ENCODE measurements at regions of chr4 and their contacts with region 1.

Region 1: DNA sequence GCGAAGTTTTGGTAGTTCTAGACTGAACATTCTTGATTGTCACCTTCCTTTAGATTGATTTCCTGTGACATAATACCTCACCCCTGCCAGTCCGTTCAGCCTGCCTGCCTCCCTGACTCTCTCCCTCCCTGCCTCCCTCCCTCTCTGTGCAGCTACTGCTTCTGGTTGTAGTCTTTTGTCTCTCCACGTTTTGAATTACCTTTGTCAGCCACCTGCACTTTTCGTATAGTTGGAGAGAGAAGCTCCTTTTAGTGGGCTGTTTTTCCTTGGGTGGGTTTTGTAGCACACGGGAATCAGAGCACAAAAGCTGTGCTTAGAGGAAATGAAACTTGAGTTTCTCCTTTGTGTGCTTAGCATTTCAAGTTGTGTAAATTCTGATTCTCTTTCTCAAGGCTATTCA is 32.6 kb upstream of the MSMO1 start:
- DNase-seq: peak in 7 of 9 donors; percentile 16 to 56 (median 51)
- ATAC-seq: peak; percentile 87
- H3K4me3 ChIP-seq: no peak overlapping the region
- H3K4me3 Mint-ChIP-seq: peak overlapping the region; percentile 45 to 80 (median 74)
- H3K27ac ChIP-seq: peak overlapping the region; percentile 49
- H3K27ac Mint-ChIP-seq: peak overlapping the region; percentile 16 to 91 (median 74)
- H3K4me1 ChIP-seq: peaks cover 0 to 15% of the 10 kb centered on the region in 2 donors
- H3K4me1 Mint-ChIP-seq: peaks cover 22 to 42% (median 28%) of the 10 kb centered on the region in 7 donors
- H3K27me3 ChIP-seq: no peaks in the 10 kb centered on the region
- H3K27me3 Mint-ChIP-seq: no peaks in the 10 kb centered on the region

Region 2: DNA sequence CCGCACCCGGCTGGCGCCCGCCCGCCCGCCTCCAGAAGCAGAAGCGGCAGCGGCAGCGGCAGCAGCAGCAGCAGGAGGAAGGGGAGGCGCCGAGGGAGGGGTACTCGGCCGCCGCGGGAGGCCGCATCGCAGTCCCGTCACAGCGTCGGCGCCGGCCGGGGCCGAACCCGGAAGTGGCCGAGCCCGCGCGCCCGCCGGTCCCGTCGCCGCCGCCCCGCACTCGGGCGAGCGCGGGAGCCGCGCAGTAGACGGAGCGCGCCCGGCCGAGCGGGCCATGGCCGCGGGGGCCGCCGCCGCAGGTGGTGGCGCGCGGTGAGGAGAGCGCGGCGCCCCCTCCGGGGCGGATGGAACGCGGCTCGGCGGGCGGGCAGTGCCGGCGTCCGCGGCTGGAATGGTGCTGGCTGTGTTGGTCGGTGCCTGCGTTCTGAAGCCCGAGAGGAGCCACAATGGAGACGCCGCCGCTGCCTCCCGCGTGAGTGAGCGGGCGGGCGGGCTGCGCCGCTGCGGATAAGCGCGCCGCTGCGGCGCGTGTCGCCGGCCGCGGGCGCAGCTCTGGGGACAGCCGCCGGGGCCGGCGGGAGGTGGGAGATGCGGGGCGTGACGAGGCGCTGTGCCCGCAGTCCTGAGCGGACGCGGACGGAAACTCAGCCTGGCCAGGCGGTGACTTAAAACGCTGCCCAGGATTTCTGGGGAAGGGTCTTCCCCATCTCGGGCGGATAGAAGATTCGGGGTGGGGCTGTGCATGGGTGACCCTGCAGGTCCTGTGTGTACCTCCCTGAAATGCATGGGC is 87.3 kb before region 1 on chr4 and contains the start of gene KLHL2:
- CTCF ChIA-PET with region 1: no interaction called
- POLR2A ChIA-PET with region 1: interaction called, 3 read pairs
- intact Hi-C with region 1: loop called in 1 of 2 experiments (anchors 1 kb)
- DNase-seq: peak; percentile 52 to 78 (median 66)
- ATAC-seq: peak; percentile 88
- H3K4me3 ChIP-seq: peak within 1 kb of the TSS; percentile 89
- H3K4me3 Mint-ChIP-seq: peak within 1 kb of the TSS; percentile 86 to 98 (median 96)
- H3K27ac ChIP-seq: peak within 1 kb of the TSS; percentile 65
- H3K27ac Mint-ChIP-seq: peak within 1 kb of the TSS; percentile 90 to 95 (median 92)
- H3K4me1 ChIP-seq: peaks cover 0 to 33% of the 10 kb centered on the region in 2 donors
- H3K4me1 Mint-ChIP-seq: peaks cover 46 to 75% (median 73%) of the 10 kb centered on the region in 7 donors
- H3K27me3 ChIP-seq: no peaks in the 10 kb centered on the region
- H3K27me3 Mint-ChIP-seq: no peaks in the 10 kb centered on the region
- total RNA-seq, gene KLHL2: 26.9 to 39.9 (median 27.9) TPM

Region 3: DNA sequence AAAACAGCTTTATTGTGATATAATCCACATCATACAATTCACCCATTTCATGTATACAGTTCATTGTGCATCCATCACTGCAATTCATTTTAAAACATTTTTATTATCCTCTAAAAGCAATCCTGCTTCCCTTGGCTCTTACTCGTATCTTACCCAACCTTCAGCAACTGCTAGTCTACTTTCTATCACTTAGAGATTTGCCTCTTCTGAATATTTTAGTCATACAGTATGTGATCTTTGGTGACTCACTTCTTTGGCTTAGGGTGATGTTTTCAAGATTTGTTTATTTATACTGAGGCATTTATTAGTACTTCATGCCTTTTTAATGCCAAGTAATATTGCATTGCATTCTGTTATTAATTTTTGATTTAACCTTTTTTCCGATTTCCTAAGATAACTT is 17.6 kb after region 1 on chr4:
- CTCF ChIA-PET with region 1: interaction called, 3 read pairs
- POLR2A ChIA-PET with region 1: no interaction called
- intact Hi-C with region 1: loop called in 1 of 2 experiments (anchors 2 kb)
- DNase-seq: no peak
- ATAC-seq: no peak
- H3K4me3 ChIP-seq: no peak overlapping the region
- H3K4me3 Mint-ChIP-seq: no peak overlapping the region
- H3K27ac ChIP-seq: no peak overlapping the region
- H3K27ac Mint-ChIP-seq: peak overlapping the region in 1 of 9 donors; percentile 36
- H3K4me1 ChIP-seq: no peaks in the 10 kb centered on the region
- H3K4me1 Mint-ChIP-seq: peaks cover 0 to 8% (median 0%) of the 10 kb centered on the region in 7 donors
- H3K27me3 ChIP-seq: no peaks in the 10 kb centered on the region
- H3K27me3 Mint-ChIP-seq: no peaks in the 10 kb centered on the region

Measured in naive thymus-derived CD4-positive, alpha-beta T cell (primary cell).